Head of caudate nucleus (tissue), 42 donors: ENCODE measurements at regions of chr6 and their contacts with region 1.

Region 1: DNA sequence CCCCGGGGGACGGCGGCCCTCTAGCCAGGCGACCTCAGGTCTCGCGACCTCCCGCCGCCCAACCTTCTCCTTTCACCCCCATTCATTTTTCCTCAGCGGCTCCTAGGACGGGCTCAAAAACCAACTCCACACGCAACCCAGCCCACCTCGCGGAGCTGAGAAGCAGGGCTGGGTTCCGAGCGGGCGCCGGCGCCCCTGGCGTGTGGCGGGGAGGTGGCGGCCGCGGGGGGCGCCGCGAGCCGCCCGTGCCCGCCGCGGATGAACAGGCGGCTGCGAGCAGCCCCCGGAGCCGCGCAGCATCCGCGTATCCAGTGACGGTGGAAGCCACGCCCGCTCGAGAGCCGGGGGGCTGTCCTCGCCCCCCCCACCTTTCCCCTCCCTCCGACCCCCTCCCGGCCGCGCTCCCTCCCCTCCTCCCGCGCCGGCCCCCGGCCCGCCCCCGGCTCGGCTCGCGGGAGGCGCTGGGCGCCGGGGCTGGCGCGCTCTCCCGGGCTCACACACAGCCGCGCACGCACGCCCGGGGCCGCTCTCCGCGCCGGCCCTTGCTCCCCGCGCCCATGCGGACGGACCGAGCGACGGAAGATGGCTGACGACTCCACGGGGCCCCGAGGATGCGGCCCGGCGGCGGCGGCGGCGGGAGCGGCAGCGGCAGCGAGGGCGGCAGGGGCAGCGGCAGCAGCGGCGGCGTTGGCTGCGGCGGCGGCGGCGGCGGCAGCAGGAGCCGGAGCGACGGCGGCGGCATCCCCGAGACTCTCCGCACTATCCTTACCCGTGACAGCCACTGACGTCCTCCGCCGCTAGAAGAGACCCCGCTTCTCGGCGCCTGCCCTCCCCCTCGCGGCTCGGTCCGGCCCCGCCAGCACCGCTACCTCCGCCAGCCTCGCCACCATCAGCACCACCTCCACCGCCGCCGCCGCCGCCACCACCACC is at the start of gene SOBP:
- DNase-seq: peak; percentile 25 to 91 (median 78)

Region 2: GRCh38 chr6:107114213-107114905 is 375.5 kb before region 1 on chr6:
- intact Hi-C with region 1: loop called (anchors 5 kb)
- DNase-seq: peak; percentile 39 to 93 (median 85)

Region 3: DNA sequence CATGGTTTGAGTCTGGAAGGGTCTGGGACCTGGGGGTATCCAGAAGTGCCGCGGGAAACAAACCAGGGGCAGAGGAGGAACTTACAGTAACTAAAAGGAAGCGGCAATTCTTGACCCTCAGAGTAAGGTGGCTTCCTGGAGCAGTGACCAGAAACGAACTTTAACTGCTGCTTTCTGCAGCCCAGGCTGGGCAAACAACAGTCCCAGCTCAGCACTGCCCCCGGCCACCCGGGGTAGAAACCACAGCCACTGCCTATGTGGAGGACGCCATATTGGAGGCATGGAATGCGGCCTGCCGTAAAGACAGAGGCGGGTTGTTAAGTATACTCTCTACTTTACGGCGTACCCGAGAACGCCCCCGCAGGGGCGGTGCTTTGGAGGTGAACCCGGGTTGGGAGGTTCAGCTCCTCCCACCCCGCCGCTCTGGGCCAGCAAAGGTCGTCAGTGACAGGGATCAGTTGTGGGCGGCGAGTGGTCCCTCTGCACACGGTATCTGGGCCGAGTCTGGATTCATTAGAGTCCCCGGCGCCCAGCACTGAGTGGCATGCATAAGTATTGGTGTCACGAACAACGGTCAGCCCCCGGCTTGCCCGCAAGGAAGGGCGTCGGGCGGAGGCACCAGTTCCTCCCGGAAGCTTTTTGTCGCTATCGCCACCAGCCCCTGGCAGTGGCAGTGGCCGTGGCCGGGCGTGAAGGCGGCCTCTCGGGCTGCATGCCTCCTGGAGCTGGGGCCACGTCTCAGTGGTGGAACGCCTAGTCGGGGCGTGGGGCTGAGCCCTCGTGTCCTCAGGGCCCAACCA is 30.4 kb before region 1 on chr6 and contains the start of gene PDSS2:
- intact Hi-C with region 1: loop called (anchors 5 kb)
- DNase-seq: peak; percentile 97 to 100 (median 99)

Region 4: GRCh38 chr6:107540465-107540857 is 50.6 kb after region 1 on chr6:
- intact Hi-C with region 1: loop called (anchors 5 kb)
- DNase-seq: peak in 3 of 42 donors; percentile 30 to 58 (median 41)

Region 5: DNA sequence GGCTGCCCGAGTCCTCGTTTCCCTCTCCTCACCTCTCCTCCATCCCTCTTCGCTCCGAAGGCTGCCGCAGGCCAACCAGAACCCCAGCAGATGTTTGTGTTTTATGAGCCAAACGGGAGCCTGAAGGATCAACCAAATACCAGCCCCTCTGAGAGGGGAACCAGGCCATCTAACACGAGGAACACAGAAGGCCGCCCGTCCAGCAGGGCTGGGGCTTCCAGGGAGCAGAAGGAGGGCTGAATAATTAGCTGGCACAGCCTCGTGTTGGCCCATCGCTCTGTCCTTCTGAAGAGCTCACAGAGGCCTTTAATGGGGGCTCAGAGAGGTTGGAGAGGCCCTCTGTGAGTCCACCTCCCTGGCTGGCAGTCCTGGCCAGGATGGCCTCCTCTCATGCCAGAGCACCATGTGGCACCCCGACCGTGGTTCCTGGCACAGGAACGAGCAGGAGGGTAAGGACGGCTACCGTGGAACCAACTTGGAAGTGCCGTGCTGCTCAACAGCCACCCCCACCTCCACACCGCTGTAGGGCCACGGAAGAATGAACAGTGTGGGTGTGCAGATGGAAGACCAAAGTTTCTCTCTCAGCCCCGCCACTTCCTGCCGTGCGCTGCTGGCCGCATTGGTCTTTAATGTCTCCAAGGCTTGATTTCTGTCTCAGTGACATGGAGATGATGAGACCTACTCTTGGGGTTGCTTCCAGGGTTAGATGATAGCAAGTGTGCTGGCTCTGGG is 179.0 kb after region 1 on chr6:
- intact Hi-C with region 1: loop called (anchors 10 kb)
- DNase-seq: peak in 3 of 42 donors; percentile 17 to 30 (median 26)